Calu3 (cell line): ENCODE measurements at regions of chr2 and their contacts with region 1.

Region 1: DNA sequence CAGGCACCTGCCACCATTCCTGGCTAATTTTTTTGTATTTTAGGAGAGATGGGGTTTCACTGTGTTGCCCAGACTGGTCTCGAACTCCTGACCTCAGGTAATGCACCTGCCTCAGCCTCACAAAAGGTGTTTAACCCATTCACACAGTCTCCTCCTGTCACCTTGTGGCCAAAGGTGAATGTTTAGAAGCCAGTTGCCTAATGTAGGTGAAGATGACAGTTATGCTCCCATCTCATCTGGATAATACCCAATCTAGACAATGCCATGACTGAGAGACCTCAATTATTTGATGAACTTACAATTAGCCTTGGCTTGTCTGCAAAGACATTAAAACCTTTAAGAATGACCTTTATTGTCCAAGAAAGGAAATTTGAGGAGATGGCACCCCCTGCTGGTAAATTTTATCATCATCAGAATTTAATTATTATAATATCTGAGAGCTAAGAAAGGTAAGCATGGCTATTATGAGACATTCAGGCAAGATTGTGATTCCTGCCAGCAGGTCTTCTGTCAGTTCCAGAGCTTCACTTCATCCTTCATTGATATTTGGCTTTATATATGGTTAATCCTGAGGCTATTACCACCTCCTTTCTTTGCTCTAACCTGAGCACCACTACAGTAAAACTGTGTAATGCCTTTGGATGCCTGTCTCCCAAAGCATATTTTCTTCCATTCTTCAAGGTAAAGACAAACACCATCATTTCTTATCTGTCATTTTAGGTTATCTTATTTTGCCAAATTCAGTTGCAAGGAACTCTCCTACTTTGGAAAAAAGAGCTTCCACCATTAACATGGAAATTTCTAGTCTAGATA is 117.6 kb downstream of the FAM124B start:
- DNase-seq: peak; percentile 39
- H3K4me3 Mint-ChIP-seq: no peak overlapping the region
- H3K27ac Mint-ChIP-seq: no peak overlapping the region
- H3K4me1 Mint-ChIP-seq: no peaks in the 10 kb centered on the region
- H3K27me3 Mint-ChIP-seq: no peaks in the 10 kb centered on the region
- CTCF ChIP-seq: peak; percentile 91

Region 2: GRCh38 chr2:224039124-224039940 is 245.0 kb before region 1 on chr2 and contains the start of gene SERPINE2:
- CTCF ChIA-PET with region 1: interaction called, 9 read pairs
- intact Hi-C with region 1: loop called (anchors 1 kb)
- DNase-seq: peak; percentile 76
- H3K4me3 Mint-ChIP-seq: peak within 1 kb of the TSS; percentile 93
- H3K27ac Mint-ChIP-seq: peak within 1 kb of the TSS; percentile 59
- H3K4me1 Mint-ChIP-seq: peaks cover 40% of the 10 kb centered on the region
- H3K27me3 Mint-ChIP-seq: peaks cover 38% of the 10 kb centered on the region
- CTCF ChIP-seq: no peak
- total RNA-seq, gene SERPINE2: 34.7 and 39.7 TPM in 2 replicates